Lower leg skin (tissue), 4 donors: ENCODE measurements at regions of chr17 and their contacts with region 1.

Region 1: GRCh38 chr17:57569853-57570252 is 175.2 kb downstream of the CCDC182 start:
- DNase-seq: no peak
- H3K4me3 ChIP-seq: no peak overlapping the region
- CTCF ChIP-seq: no peak
- POLR2A ChIP-seq: no peak

Region 2: DNA sequence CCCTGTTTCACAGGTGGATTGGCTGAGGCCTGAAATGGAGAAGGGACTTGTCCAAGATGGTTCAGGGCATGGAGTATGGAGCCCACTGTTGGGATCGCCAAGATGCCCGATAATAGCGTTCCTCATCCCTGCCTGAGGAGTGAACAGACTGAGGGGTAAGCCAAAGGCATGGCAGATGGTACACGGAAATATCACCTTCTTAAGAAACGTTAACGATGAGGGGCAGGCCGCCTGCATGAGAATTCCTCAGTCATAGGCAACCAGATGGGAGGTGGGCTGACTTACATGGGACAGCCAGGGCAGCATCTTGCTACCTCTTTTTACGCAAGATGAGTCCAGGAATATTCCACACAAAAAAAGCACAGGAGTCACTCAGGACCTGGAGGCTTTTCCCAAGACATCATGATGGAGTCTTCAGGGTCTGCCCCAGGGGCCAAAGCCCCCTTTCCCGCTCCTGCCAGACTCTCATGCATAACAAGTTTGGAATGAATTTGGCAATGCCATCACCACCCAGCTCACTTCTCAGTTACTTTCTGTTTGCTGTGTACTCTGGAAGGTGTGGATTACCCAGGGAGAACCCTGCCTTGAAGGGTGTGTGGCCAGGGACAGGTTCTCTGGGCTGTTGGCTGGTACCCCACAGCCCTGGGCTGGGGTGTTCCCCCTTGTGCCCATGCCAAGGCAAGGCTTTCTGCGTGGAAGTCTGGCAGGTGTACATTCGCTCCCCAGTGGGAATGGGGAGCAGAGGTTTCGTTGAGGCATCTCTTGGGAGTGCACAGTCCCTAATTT is 12.7 kb before region 1 on chr17:
- intact Hi-C with region 1: loop called (anchors 1 kb)
- DNase-seq: no peak
- H3K4me3 ChIP-seq: no peak overlapping the region
- CTCF ChIP-seq: no peak
- POLR2A ChIP-seq: no peak

Region 3: GRCh38 chr17:59001158-59001814 is 1431.4 kb after region 1 on chr17:
- intact Hi-C with region 1: no loop called
- DNase-seq: peak; percentile 27 to 86
- H3K4me3 ChIP-seq: no peak overlapping the region
- CTCF ChIP-seq: no peak
- POLR2A ChIP-seq: no peak